IMR-90 (cell line): ENCODE measurements at regions of chr5 and their contacts with region 1.

Region 1: DNA sequence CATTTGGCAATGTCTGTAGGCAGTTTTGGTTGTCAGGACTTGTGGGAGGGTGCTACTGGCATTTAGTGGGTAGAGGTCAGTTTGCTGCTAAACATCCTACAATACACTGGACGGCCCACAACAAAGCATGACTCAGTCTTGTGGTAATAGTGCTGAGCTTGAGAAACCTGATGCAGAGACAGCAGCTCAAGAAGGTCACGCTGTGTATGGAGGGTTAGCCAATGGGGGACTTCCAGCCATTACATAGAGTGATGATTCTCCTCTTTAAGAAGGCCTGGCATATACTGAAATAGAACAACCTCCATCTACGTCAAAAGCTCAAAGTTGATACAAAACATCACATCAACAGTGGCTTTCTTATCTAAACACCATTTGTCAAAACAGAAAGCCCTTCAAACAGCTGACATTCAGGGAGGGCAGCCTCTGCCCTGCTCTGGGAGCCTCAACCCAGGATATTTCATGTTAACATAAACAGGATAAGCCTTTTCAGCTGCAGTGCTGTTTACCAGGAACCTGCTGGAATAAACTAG is 143.0 kb downstream of the GPBP1 start:
- DNase-seq: peak; percentile 100
- ATAC-seq: peak; percentile 97
- H3K4me3 ChIP-seq: peak overlapping the region; percentile 11; the same call in 1 of the 2 replicates
- H3K27ac ChIP-seq: peak overlapping the region; percentile 86; the same call in 1 of the 2 replicates
- H3K4me1 ChIP-seq: peaks cover 19% of the 10 kb centered on the region
- H3K27me3 ChIP-seq: no peaks in the 10 kb centered on the region
- CTCF ChIP-seq: no peak
- POLR2A ChIP-seq: no peak
- RAD21 ChIP-seq: no peak; the same call in 1 of the 2 replicates

Region 2: GRCh38 chr5:57408714-57409113 is 91.9 kb after region 1 on chr5:
- CTCF ChIA-PET with region 1: no interaction called
- POLR2A ChIA-PET with region 1: no interaction called
- dilution Hi-C with region 1: no loop called
- in situ Hi-C with region 1: no loop called
- intact Hi-C with region 1: loop called (anchors 1 kb)
- DNase-seq: peak; percentile 63
- ATAC-seq: no peak
- H3K4me3 ChIP-seq: no peak overlapping the region
- H3K27ac ChIP-seq: 0 out of 2 replicates have a peak overlapping the region, but pooled peaks have one; percentile 12
- H3K4me1 ChIP-seq: peaks cover 11% of the 10 kb centered on the region
- H3K27me3 ChIP-seq: no peaks in the 10 kb centered on the region
- CTCF ChIP-seq: no peak
- POLR2A ChIP-seq: no peak
- RAD21 ChIP-seq: no peak

Region 3: GRCh38 chr5:57956636-57957035 is 639.8 kb after region 1 on chr5:
- CTCF ChIA-PET with region 1: no interaction called
- POLR2A ChIA-PET with region 1: no interaction called
- dilution Hi-C with region 1: no loop called
- in situ Hi-C with region 1: no loop called
- intact Hi-C with region 1: no loop called
- DNase-seq: no peak
- ATAC-seq: no peak
- H3K4me3 ChIP-seq: no peak overlapping the region
- H3K27ac ChIP-seq: no peak overlapping the region
- H3K4me1 ChIP-seq: no peaks in the 10 kb centered on the region
- H3K27me3 ChIP-seq: no peaks in the 10 kb centered on the region; the same call in 1 of the 2 replicates
- CTCF ChIP-seq: no peak
- POLR2A ChIP-seq: no peak
- RAD21 ChIP-seq: no peak